Aorta (tissue), 5 donors: ENCODE measurements at regions of chr1 and their contacts with region 1.

Region 1: DNA sequence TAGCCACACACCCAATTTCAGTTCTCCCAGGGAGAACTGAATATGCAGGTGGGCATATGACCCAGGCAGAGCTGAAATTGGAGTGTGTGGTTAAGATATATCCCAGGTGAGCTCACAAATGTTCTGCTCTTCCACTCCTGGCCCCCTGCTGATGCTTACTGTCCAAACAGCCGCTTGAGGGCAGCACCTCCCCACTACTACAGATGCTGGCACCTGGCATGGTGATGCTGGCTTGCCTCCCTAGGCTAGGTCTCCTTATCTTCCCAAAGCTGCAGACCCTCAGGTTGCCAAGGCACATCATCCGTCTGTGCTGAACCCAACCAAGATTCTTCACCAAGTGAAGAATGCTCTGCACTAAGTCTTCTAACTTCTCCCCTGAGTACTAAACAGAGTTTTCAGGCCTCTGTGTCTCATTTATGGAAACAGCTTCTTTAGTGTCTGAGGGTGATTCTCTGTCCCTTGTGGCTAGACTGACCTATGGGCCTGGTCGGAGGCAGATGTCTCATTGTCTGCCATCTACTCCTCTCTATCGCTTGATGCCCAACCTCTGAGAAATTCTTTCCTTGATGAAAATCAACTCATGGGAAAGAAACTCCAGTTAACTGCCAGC is 27.2 kb downstream of the XCL1 start:
- DNase-seq: peak; percentile 75 to 90
- ATAC-seq: peak; percentile 90
- H3K4me3 ChIP-seq: no peak overlapping the region
- H3K27ac ChIP-seq: no peak overlapping the region
- H3K4me1 ChIP-seq: peaks cover 7 to 10% of the 10 kb centered on the region in 2 donors
- H3K27me3 ChIP-seq: no peaks in the 10 kb centered on the region

Region 2: DNA sequence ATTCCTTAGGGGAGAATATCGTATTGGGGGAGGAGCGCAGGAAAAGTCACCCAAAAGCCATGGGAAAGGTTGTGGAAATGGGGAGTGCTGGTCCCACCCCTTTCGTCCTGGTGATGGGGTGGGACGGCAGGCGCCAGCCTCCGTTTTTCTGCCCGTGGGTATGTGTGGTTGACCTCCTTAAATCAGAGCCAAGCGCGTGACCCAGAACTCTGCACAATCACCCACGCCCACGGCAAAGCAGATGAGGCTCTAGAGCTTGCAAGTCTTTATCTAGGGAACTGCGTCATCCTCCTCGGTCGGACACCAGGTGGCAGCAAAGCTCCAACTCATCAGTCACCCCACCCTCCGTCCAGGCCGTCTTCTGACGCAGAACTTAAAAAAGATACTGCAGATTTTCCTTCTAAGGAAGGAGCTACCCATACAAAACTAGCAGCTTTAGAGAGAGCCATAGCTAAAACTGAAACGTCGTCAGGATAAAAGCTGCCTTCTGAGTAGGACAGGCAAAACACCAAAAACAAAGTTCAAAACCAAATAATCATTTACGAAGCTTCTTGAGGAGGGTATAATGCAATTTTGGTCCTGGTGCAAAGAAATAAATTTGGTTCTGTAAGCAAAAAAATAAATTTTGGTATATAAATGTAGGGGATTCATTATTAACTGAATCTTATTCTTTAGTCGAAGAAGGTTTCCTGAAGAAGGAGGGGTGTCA is 260.9 kb before region 1 on chr1:
- intact Hi-C with region 1: loop called in 1 of 2 experiments (anchors 10 kb)
- DNase-seq: peak; percentile 92 to 93
- ATAC-seq: peak; percentile 96
- H3K4me3 ChIP-seq: no peak overlapping the region
- H3K27ac ChIP-seq: peak overlapping the region; percentile 0 to 19
- H3K4me1 ChIP-seq: no peaks in the 10 kb centered on the region
- H3K27me3 ChIP-seq: no peaks in the 10 kb centered on the region

Region 3: GRCh38 chr1:168637350-168637991 is 33.9 kb after region 1 on chr1:
- intact Hi-C with region 1: no loop called
- DNase-seq: no peak
- ATAC-seq: no peak
- H3K4me3 ChIP-seq: no peak overlapping the region
- H3K27ac ChIP-seq: peak overlapping the region in 1 of 2 donors; percentile 54
- H3K4me1 ChIP-seq: peaks cover 0 to 4% of the 10 kb centered on the region in 2 donors
- H3K27me3 ChIP-seq: no peaks in the 10 kb centered on the region

Region 4: DNA sequence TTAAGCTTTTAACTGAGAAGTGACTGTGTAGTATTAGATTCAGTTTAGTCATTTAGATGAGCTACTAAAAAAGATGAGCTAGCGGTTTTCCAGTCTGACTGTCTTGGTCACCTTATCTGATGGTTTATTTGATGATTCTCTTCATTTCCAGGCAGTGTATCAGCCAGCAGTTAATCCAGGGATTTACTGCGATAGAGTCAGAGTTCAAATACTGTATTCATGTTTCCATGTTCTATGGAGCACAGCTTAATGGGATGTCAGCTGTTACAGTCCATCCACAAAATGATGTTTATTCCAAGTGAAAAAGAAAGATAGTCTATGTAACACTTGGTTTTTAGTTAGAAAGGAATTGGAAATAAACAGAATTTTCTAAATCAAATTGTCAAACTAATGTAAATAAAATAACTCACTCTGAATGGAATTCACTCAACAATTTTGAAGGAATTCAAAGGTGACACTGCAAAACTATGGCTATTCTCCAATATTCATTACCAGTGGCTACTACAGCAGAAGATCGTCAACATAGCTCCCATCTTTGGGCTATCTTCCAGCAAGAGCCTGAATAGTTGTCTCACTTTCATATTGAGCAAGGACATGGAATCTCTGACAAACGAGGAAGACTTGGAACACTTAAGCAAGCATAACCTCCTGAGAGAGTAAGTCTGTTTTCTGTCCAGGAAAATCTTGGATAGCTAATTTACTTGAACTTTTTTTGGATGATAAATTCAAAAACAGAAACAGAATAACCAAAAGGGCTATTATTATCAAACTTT is 180.0 kb after region 1 on chr1:
- intact Hi-C with region 1: loop called in 1 of 2 experiments (anchors 10 kb)
- DNase-seq: no peak
- ATAC-seq: peak; percentile 77
- H3K4me3 ChIP-seq: no peak overlapping the region
- H3K27ac ChIP-seq: no peak overlapping the region
- H3K4me1 ChIP-seq: no peaks in the 10 kb centered on the region
- H3K27me3 ChIP-seq: no peaks in the 10 kb centered on the region

Region 5: GRCh38 chr1:168853866-168854265 is 250.3 kb after region 1 on chr1:
- intact Hi-C with region 1: no loop called
- DNase-seq: no peak
- ATAC-seq: no peak
- H3K4me3 ChIP-seq: no peak overlapping the region
- H3K27ac ChIP-seq: no peak overlapping the region
- H3K4me1 ChIP-seq: no peaks in the 10 kb centered on the region
- H3K27me3 ChIP-seq: no peaks in the 10 kb centered on the region

Region 6: DNA sequence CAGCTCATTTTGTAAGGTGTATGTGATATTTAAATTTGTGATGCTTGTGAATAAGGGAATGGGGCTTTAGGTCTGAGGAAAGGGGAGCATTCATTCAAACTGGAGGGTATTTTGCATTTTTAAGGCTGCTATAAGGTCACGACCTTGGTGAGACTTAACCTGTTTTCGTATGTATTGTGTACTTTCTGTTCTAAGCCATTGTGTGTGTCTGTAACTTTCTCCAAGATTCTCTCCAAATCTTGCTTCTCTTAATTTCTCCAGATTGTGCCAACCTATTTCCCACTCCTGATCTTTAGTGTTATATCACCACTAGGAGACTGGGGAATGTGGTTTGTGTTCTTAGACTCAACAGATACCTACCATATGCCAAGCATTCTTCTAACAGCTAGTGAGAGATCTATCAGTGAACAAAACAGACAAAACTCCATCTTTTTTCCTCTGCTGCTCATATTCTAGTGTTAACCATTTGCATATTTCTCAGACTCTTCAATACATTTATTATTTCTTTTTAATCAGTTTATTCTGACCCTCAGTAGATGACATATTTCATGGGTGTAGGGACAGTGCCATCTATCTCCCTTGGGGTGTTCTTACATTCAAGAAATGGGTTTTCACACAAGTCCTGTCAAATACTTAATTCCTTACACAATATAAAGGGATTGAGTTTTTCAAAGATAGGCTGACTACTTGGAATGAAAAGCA is 530.3 kb after region 1 on chr1:
- intact Hi-C with region 1: loop called in 1 of 2 experiments (anchors 10 kb)
- DNase-seq: no peak
- ATAC-seq: no peak
- H3K4me3 ChIP-seq: no peak overlapping the region
- H3K27ac ChIP-seq: no peak overlapping the region
- H3K4me1 ChIP-seq: peaks cover 4 to 5% of the 10 kb centered on the region in 2 donors
- H3K27me3 ChIP-seq: no peaks in the 10 kb centered on the region

Region 7: DNA sequence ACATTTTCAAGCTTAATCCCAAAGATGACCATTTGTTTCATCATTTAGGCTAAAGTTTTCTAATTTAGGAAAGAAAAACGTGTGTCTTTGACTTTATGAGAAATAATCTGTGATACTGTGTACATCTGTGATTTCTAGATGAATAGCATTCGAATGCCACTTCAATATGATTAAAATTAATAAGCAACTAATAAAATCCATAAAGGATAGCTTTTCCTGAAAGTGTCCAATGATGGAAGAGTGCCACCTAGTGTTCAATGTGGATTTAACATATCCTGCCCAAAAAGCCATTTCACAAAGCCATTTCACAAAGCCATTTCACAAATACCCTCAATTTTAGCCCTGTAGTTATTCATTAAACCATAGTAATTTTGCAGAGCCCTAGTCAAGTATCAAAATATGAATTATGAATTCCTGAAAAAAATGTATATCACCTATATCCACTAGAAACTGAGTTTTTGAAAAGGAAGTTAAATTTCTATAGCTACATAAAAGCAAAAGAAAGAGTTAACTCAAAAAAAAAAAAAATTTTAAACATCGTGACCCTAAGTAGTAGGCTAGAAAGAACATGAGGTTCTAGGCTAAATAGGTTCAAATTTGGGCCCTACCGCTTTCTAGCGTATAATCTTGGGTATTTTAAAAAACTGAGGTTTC is 744.9 kb after region 1 on chr1:
- intact Hi-C with region 1: loop called (anchors 2 to 5 kb)
- DNase-seq: no peak
- ATAC-seq: no peak
- H3K4me3 ChIP-seq: no peak overlapping the region
- H3K27ac ChIP-seq: no peak overlapping the region
- H3K4me1 ChIP-seq: no peaks in the 10 kb centered on the region
- H3K27me3 ChIP-seq: no peaks in the 10 kb centered on the region